Calu3 (cell line): ENCODE measurements at regions of chr5 and their contacts with region 1.

Region 1: GRCh38 chr5:79562351-79563246 is 48.7 kb upstream of the HOMER1 start:
- DNase-seq: no peak
- H3K4me3 Mint-ChIP-seq: no peak overlapping the region
- H3K27ac Mint-ChIP-seq: no peak overlapping the region
- H3K4me1 Mint-ChIP-seq: peaks cover 9% of the 10 kb centered on the region
- H3K27me3 Mint-ChIP-seq: peaks cover 13% of the 10 kb centered on the region
- CTCF ChIP-seq: no peak

Region 2: DNA sequence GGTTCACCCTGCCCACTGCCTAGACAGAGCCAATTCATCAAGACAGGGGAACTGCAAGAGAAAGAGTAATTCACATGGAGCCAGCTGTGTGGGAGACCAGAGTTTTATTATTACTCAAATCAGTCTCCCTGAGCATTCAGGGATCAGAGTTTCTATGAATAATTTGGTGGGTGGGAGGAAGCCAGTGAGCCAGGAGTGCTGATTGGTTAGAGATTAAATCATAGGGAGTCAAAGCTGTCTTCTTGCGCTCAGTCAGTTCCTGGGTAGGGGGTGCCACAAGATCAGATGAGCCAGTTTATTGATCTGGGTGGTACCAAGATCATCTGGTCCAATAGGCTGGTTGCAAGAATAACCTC is 1811.0 kb before region 1 on chr5:
- CTCF ChIA-PET with region 1: no interaction called
- intact Hi-C with region 1: no loop called
- DNase-seq: no peak
- H3K4me3 Mint-ChIP-seq: no peak overlapping the region
- H3K27ac Mint-ChIP-seq: no peak overlapping the region
- H3K4me1 Mint-ChIP-seq: peaks cover 18% of the 10 kb centered on the region
- H3K27me3 Mint-ChIP-seq: no peaks in the 10 kb centered on the region
- CTCF ChIP-seq: no peak

Region 3: GRCh38 chr5:79653843-79654242 is 91.2 kb after region 1 on chr5:
- CTCF ChIA-PET with region 1: interaction called, 10 read pairs
- intact Hi-C with region 1: no loop called
- DNase-seq: no peak
- H3K4me3 Mint-ChIP-seq: no peak overlapping the region
- H3K27ac Mint-ChIP-seq: peak overlapping the region; percentile 64
- H3K4me1 Mint-ChIP-seq: peaks cover 18% of the 10 kb centered on the region
- H3K27me3 Mint-ChIP-seq: no peaks in the 10 kb centered on the region
- CTCF ChIP-seq: no peak

Region 4: DNA sequence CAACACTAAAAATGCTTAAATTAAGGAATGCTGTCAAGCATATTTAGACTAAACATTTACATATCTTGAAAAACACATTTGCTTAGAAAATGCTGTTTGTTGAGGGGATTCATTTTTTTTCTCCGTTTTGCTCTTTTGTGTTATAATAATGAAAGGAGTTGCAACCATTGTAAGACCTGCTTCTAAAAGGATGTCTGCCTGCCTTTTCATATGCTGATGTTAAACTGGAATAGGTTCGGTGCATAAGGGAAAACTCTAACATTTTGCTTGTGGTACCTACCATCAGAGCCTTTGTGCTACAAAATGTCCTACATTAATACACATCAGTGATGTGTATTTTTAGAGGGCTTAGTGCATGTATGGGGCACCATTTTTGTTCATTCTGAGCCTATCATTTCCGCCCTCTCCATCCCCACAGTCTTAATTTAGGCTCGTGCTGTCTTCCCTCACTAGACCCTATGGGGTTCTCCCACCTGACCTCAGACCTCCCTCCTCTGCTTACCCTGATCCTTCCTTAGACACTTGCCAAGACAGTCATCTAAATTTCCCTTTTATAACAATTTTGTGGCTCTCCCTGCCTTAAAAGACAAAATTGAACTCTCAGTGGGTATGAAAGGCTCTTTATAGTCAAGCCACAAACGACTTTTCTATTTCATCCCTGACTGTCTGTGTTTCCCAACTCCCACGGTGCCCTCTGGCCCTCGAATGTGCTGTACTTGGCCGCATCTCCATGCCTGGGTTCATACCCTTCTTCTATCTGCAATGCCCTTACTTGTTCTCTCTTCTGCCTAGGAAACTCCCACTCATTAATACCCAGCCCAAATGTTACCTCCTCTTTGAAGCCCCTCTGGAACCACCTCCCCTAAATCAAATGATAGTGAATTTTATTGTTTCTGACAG is 188.3 kb after region 1 on chr5:
- CTCF ChIA-PET with region 1: no interaction called
- intact Hi-C with region 1: no loop called
- DNase-seq: no peak
- H3K4me3 Mint-ChIP-seq: no peak overlapping the region
- H3K27ac Mint-ChIP-seq: no peak overlapping the region
- H3K4me1 Mint-ChIP-seq: peaks cover 11% of the 10 kb centered on the region
- H3K27me3 Mint-ChIP-seq: no peaks in the 10 kb centered on the region
- CTCF ChIP-seq: no peak